T-cell (primary cell): ENCODE measurements at regions of chr20 and their contacts with region 1.

Region 1: GRCh38 chr20:58691773-58692593 is 617 bp upstream of the NPEPL1 start:
- DNase-seq: peak in 5 of 35 experiments; percentile 4 to 33 (median 12)
- ATAC-seq: no peak
- H3K4me3 ChIP-seq: no peak overlapping the region
- H3K4me3 Mint-ChIP-seq: peak overlapping the region; percentile 46 to 57 (median 51)
- H3K27ac ChIP-seq: peak overlapping the region; percentile 40
- H3K27ac Mint-ChIP-seq: peak overlapping the region; percentile 73
- H3K4me1 ChIP-seq: peaks cover 0 to 23% of the 10 kb centered on the region in 2 experiments
- H3K4me1 Mint-ChIP-seq: peaks cover 6 to 20% (median 8%) of the 10 kb centered on the region in 3 donors
- H3K27me3 ChIP-seq: no peaks in the 10 kb centered on the region
- H3K27me3 Mint-ChIP-seq: no peaks in the 10 kb centered on the region

Region 2: GRCh38 chr20:58666702-58667101 is 25.3 kb before region 1 on chr20:
- CTCF ChIA-PET with region 1: no interaction called
- POLR2A ChIA-PET with region 1: interaction called in 1 of 2 experiments, 10 read pairs
- DNase-seq: no peak
- ATAC-seq: no peak
- H3K4me3 ChIP-seq: no peak overlapping the region
- H3K4me3 Mint-ChIP-seq: no peak overlapping the region
- H3K27ac ChIP-seq: no peak overlapping the region
- H3K27ac Mint-ChIP-seq: peak overlapping the region in 1 of 2 donors; percentile 76
- H3K4me1 ChIP-seq: peaks cover 6 to 10% of the 10 kb centered on the region in 2 experiments
- H3K4me1 Mint-ChIP-seq: peaks cover 44 to 53% (median 45%) of the 10 kb centered on the region in 3 donors
- H3K27me3 ChIP-seq: no peaks in the 10 kb centered on the region
- H3K27me3 Mint-ChIP-seq: no peaks in the 10 kb centered on the region

Region 3: GRCh38 chr20:58718121-58718563 is 26.2 kb after region 1 on chr20:
- CTCF ChIA-PET with region 1: interaction called in 1 of 2 experiments, 11 read pairs
- POLR2A ChIA-PET with region 1: no interaction called
- DNase-seq: no peak
- ATAC-seq: no peak
- H3K4me3 ChIP-seq: no peak overlapping the region
- H3K4me3 Mint-ChIP-seq: no peak overlapping the region
- H3K27ac ChIP-seq: no peak overlapping the region
- H3K27ac Mint-ChIP-seq: no peak overlapping the region
- H3K4me1 ChIP-seq: no peaks in the 10 kb centered on the region
- H3K4me1 Mint-ChIP-seq: no peaks in the 10 kb centered on the region
- H3K27me3 ChIP-seq: peaks cover 0 to 22% of the 10 kb centered on the region in 2 experiments
- H3K27me3 Mint-ChIP-seq: peaks cover 22 to 23% of the 10 kb centered on the region in 2 donors